K562 (cell line): ENCODE measurements at regions of chr12 and their contacts with region 1.

Region 1: DNA sequence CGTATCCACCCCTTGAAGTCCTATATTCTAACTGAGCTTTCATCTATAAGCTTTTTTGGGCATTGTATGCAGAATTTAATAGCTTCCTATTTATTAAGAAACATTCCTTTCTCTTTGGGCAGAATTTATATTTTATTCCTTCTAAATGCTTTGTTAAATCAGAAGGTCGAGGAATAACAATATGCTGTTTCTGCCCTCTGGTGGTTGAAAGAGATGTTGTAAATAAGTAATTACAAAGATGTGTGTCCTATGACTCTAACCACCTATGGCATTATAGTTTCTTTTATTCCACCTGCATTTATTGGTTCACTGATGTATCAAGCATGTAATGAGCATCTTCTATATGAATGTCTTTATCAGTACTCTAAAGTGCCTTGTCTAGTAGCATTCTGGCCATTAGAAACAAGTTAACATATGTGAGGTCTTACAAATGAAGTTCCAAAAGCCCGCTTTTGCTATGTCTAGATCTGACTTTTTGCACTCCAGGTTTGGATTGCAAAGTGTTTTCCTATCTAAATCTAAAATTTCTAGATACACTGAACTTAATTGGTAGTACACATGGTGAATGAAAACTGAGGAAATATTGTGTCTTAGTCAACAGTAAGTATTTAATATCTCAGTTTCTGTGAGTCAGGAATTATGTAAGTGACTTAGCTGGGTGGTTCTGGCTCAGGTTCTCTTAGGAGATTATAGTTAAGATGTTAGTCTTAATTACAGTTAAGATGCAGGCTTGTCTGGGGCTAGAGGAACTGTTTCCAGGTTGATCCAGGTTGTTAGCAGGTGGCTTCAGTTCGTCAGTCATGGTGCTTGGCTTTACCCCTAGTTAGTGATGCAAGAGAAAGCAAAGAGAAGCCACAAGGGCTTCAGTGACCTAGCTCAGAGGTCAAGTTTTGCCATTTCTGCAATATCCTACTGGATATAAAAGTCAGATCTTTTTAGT is 57.5 kb downstream of the PLEKHA5 start:
- DNase-seq: peak; percentile 17 to 41 (median 24)
- ATAC-seq: peak; percentile 71
- H3K4me3 ChIP-seq: no peak overlapping the region
- H3K27ac ChIP-seq: no peak overlapping the region
- H3K4me1 ChIP-seq: peaks cover 0 to 5% of the 10 kb centered on the region in 2 experiments; a peak in 2 of 5 replicates
- H3K27me3 ChIP-seq: no peaks in the 10 kb centered on the region
- CTCF ChIP-seq: peak in 2 of 3 experiments; percentile 27 to 51; a peak in 3 of 6 replicates
- EP300 ChIP-seq: no peak
- POLR2A ChIP-seq: no peak
- RAD21 ChIP-seq: peak; percentile 52 to 73

Region 2: DNA sequence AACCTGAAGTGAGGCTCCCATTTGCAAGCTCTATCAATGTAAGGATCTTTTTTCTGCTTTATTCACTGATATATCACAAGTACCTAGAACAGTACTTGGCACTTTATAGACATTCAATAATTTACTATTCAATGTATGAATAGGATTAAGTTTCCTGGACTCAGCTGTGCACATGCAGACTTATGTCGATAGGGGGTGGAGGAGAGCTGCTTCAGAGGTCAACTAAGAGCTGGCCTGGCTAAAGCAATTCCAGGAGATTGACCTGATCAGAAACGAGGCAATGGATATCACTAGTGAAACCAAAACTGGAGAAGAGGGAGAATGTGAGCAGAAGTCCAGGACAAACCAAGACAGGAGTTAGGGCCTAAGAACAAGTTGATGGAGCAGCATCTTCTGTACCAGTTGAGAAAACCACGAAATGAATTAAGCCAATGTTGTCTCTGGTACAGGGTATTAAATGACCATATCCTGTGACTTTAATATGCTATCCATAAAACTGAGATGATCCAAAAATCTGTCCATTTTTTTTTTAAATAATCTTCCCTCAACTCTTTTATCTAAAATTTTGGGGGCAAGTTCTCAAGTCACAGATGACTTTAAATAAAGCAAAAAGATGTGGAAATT is 756.5 kb before region 1 on chr12:
- CTCF ChIA-PET with region 1: no interaction called
- POLR2A ChIA-PET with region 1: no interaction called
- in situ Hi-C with region 1: no loop called
- intact Hi-C with region 1: loop called (anchors 2 kb)
- DNase-seq: peak; percentile 17 to 34 (median 22)
- ATAC-seq: peak; percentile 76
- H3K4me3 ChIP-seq: no peak overlapping the region
- H3K27ac ChIP-seq: no peak overlapping the region
- H3K4me1 ChIP-seq: no peaks in the 10 kb centered on the region
- H3K27me3 ChIP-seq: no peaks in the 10 kb centered on the region
- CTCF ChIP-seq: peak; percentile 50 to 61 (median 56); a peak in 5 of 6 replicates
- EP300 ChIP-seq: no peak
- POLR2A ChIP-seq: no peak
- RAD21 ChIP-seq: peak; percentile 19 to 46; a peak in 1 of 4 replicates

Region 3: GRCh38 chr12:18882690-18883089 is 304.3 kb before region 1 on chr12:
- CTCF ChIA-PET with region 1: no interaction called
- POLR2A ChIA-PET with region 1: no interaction called
- in situ Hi-C with region 1: no loop called
- intact Hi-C with region 1: loop called (anchors 2 kb)
- DNase-seq: peak in 1 of 4 experiments; percentile 2
- ATAC-seq: peak; percentile 47; the same call in 1 of the 3 replicates
- H3K4me3 ChIP-seq: no peak overlapping the region
- H3K27ac ChIP-seq: no peak overlapping the region
- H3K4me1 ChIP-seq: no peaks in the 10 kb centered on the region; a peak in 1 of 5 replicates
- H3K27me3 ChIP-seq: no peaks in the 10 kb centered on the region
- CTCF ChIP-seq: 0 out of 6 replicates have a peak, but pooled peaks of 1 of the 3 experiments have one; percentile 5
- EP300 ChIP-seq: no peak
- POLR2A ChIP-seq: no peak
- RAD21 ChIP-seq: peak in 1 of 2 experiments; percentile 33; a peak in 2 of 4 replicates

Region 4: DNA sequence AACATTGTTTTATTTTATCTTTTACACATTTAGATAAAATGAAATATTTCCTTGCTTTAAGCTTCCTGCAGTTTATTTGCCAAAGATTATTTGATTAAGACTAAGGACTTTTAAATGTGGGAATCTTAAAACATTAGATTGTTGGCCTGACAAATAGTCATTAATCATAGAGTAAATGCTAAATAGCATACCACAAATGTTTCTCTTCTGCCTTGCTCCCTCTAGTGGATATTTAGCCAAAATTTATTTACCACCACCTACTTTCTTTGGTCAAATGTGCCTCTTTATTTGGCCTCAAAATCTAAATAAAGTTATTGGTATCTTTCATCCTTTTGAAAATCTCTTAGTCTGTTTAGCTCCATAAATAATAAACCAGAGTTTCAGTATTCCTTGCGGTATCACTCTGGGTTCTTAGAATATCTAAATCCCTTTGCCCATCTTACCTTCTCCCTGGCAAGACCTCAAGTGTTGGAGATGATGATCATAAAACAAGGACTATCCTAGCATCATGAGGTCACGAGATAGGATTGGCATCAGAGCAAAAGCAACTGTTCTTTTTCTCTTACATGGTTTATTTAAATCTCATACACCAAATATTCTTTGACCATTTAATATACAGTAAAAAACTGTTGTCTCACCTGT is 101.7 kb after region 1 on chr12:
- CTCF ChIA-PET with region 1: no interaction called
- POLR2A ChIA-PET with region 1: no interaction called
- in situ Hi-C with region 1: no loop called
- intact Hi-C with region 1: loop called (anchors 5 kb)
- DNase-seq: peak; percentile 7 to 18 (median 12)
- ATAC-seq: 0 out of 3 replicates have a peak, but pooled peaks have one; percentile 47
- H3K4me3 ChIP-seq: no peak overlapping the region
- H3K27ac ChIP-seq: no peak overlapping the region
- H3K4me1 ChIP-seq: no peaks in the 10 kb centered on the region
- H3K27me3 ChIP-seq: no peaks in the 10 kb centered on the region
- CTCF ChIP-seq: peak in 2 of 3 experiments; percentile 35 to 60; a peak in 2 of 6 replicates
- EP300 ChIP-seq: no peak
- POLR2A ChIP-seq: no peak
- RAD21 ChIP-seq: peak; percentile 35 to 47